Endothelial cell of umbilical vein (primary cell): ENCODE measurements at regions of chr21 and their contacts with region 1.

Region 1: DNA sequence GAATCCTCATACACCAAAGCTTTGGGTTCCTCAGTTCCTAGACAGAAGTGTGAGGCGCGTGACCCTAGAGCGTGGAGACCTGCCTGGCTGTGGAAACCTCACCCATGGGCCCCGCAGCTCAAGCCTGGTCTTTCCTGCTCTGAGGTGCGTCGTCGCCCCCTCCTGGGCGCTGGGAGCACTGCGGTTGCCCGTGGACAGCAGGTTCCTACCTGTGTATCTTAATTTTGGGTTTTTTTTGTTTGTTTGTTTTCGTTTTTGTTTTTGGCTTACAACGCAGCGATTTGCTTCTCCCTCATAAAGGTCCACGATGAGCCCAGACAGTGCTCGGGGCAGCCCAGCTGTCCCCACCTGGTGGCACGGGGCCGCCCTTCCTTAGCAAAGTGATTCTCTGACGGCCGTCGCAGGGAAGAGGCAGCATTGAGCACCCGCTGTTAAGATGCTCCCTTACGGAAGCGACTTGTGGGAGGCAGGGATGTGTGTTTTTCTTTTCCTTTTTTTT is 36.6 kb upstream of the TRAPPC10 start:
- DNase-seq: peak; percentile 59
- H3K4me3 ChIP-seq: no peak overlapping the region
- H3K27ac ChIP-seq: no peak overlapping the region
- H3K4me1 ChIP-seq: no peaks in the 10 kb centered on the region
- H3K27me3 ChIP-seq: no peaks in the 10 kb centered on the region
- CTCF ChIP-seq: peak; percentile 96 to 97
- POLR2A ChIP-seq: no peak

Region 2: GRCh38 chr21:43789276-43790009 is 186.1 kb before region 1 on chr21 and contains the start of gene RRP1:
- CTCF ChIA-PET with region 1: interaction called, 10 read pairs
- POLR2A ChIA-PET with region 1: no interaction called
- dilution Hi-C with region 1: no loop called
- intact Hi-C with region 1: no loop called
- DNase-seq: peak; percentile 91
- H3K4me3 ChIP-seq: peak within 1 kb of the TSS; percentile 85 to 95 (median 91)
- H3K27ac ChIP-seq: peak within 1 kb of the TSS; percentile 59
- H3K4me1 ChIP-seq: peaks cover 7% of the 10 kb centered on the region
- H3K27me3 ChIP-seq: no peaks in the 10 kb centered on the region
- CTCF ChIP-seq: peak; percentile 79 to 98
- POLR2A ChIP-seq: peak; percentile 96
- total RNA-seq, gene RRP1: 35.0 and 36.3 TPM in 2 replicates

Region 3: DNA sequence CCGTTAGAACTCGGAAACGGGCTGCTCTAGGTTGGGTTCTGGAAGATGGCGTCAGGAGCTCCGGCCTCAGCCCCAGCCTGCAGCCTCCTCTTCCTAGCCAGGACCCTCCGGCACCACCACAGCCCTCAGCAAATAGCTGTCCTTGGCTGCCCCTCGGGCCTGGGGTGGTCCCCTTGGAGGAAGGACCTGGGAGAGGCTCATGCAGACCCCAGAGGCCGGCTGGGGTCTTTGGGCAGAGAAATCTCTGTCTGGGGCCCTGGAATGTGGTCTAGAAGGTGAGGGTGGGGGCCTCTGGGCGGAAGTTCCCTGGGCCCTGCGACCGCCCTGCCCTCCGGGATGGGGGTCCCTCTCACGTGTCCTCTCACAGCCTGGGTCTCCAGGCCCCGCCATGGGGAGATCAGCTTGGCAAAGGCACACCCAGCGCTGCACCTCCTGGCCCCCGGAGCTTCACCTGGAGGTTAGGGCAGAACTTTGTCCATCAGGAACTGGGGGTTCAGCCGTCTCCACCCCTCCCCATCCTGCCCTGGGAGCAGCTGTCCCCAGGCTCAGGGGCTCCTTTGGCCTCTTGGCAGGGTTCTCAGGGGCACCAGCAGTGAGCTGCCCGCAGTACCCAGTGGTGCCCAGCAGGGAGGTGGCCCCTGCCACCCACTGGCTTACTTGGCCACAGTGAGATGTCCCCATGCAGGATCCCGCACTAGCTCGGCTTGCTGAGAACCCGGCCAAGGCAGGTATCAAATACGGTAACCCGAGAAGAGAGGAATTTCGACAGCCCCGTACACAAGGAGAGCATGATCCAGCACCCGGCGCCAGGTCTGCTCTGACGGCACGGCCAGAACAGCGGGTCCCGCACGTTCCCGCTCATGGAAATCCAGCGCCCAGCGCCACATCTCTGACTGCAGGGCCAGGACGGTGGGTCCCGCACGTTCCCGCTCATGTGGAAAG is 149.6 kb before region 1 on chr21:
- CTCF ChIA-PET with region 1: interaction called, 13 read pairs
- POLR2A ChIA-PET with region 1: no interaction called
- dilution Hi-C with region 1: no loop called
- intact Hi-C with region 1: no loop called
- DNase-seq: no peak
- H3K4me3 ChIP-seq: no peak overlapping the region
- H3K27ac ChIP-seq: no peak overlapping the region
- H3K4me1 ChIP-seq: no peaks in the 10 kb centered on the region
- H3K27me3 ChIP-seq: peaks cover 0 to 3% of the 10 kb centered on the region in 2 experiments
- CTCF ChIP-seq: peak; percentile 16 to 22
- POLR2A ChIP-seq: no peak

Region 4: GRCh38 chr21:43938751-43939442 is 36.6 kb before region 1 on chr21:
- CTCF ChIA-PET with region 1: interaction called, 37 read pairs
- POLR2A ChIA-PET with region 1: no interaction called
- dilution Hi-C with region 1: no loop called
- intact Hi-C with region 1: no loop called
- DNase-seq: peak; percentile 68
- H3K4me3 ChIP-seq: peak overlapping the region; percentile 20 to 59 (median 27)
- H3K27ac ChIP-seq: peak overlapping the region; percentile 42
- H3K4me1 ChIP-seq: peaks cover 5% of the 10 kb centered on the region
- H3K27me3 ChIP-seq: no peaks in the 10 kb centered on the region
- CTCF ChIP-seq: peak; percentile 99 to 100
- POLR2A ChIP-seq: no peak

Region 5: GRCh38 chr21:43956670-43957035 is 18.9 kb before region 1 on chr21:
- CTCF ChIA-PET with region 1: interaction called, 12 read pairs
- POLR2A ChIA-PET with region 1: no interaction called
- dilution Hi-C with region 1: no loop called
- intact Hi-C with region 1: no loop called
- DNase-seq: no peak
- H3K4me3 ChIP-seq: no peak overlapping the region
- H3K27ac ChIP-seq: no peak overlapping the region
- H3K4me1 ChIP-seq: peaks cover 10% of the 10 kb centered on the region
- H3K27me3 ChIP-seq: no peaks in the 10 kb centered on the region
- CTCF ChIP-seq: no peak
- POLR2A ChIP-seq: no peak